ENCODE measurements at regions of chr1 and their contacts with region 1.

Region 1: DNA sequence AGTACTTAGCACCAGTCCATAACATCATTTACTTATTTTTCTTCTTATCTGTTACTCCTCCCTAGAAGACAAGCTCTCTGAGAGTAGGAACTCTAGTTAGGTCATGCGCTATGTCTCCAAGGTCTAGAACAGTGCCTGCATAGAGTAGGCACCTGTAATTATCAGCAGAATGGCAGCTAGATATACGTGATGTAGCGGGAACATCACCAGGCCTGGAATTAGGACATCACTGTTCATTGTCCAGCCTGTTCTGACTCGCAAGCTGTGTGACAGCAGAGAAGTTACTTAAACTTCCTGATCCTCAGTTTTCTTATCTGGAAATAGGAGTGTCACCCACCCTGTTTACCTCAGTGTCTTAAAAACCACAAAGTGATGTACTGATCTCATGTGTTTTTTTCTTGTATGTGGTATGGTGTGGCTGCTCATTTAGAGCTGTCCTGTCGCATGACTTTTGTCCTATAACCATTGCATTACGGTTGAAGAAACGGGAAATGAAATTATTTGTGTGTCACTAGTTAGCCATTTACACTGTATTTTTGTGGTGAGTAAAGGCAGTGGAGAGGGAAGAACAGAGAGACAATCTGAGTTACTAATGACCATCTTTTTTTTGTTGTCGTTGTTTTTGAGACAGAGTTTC is 37.1 kb upstream of the EXO1 start:
- DNase-seq: no peak
- ATAC-seq: no peak
- H3K4me3 ChIP-seq: no peak overlapping the region
- H3K27ac ChIP-seq: no peak overlapping the region
- H3K4me1 ChIP-seq: peaks cover 12 to 36% of the 10 kb centered on the region in 2 experiments
- H3K27me3 ChIP-seq: no peaks in the 10 kb centered on the region
- CTCF ChIP-seq: no peak
- EP300 ChIP-seq: no peak
- POLR2A ChIP-seq: no peak
- RAD21 ChIP-seq: no peak

Region 2: GRCh38 chr1:241048622-241049021 is 762.3 kb before region 1 on chr1:
- CTCF ChIA-PET with region 1: no interaction called
- POLR2A ChIA-PET with region 1: no interaction called
- in situ Hi-C with region 1: no loop called
- intact Hi-C with region 1: no loop called
- DNase-seq: no peak
- ATAC-seq: no peak
- H3K4me3 ChIP-seq: no peak overlapping the region
- H3K27ac ChIP-seq: no peak overlapping the region
- H3K4me1 ChIP-seq: no peaks in the 10 kb centered on the region
- H3K27me3 ChIP-seq: no peaks in the 10 kb centered on the region
- CTCF ChIP-seq: no peak
- EP300 ChIP-seq: no peak
- POLR2A ChIP-seq: no peak
- RAD21 ChIP-seq: no peak

Region 3: GRCh38 chr1:241776916-241777315 is 34.0 kb before region 1 on chr1:
- CTCF ChIA-PET with region 1: no interaction called
- POLR2A ChIA-PET with region 1: no interaction called
- in situ Hi-C with region 1: no loop called
- intact Hi-C with region 1: loop called (anchors 2 kb)
- DNase-seq: no peak
- ATAC-seq: peak; percentile 52
- H3K4me3 ChIP-seq: no peak overlapping the region
- H3K27ac ChIP-seq: no peak overlapping the region
- H3K4me1 ChIP-seq: peaks cover 5 to 9% of the 10 kb centered on the region in 2 experiments
- H3K27me3 ChIP-seq: no peaks in the 10 kb centered on the region
- CTCF ChIP-seq: no peak
- EP300 ChIP-seq: no peak
- POLR2A ChIP-seq: no peak
- RAD21 ChIP-seq: no peak

Region 4: DNA sequence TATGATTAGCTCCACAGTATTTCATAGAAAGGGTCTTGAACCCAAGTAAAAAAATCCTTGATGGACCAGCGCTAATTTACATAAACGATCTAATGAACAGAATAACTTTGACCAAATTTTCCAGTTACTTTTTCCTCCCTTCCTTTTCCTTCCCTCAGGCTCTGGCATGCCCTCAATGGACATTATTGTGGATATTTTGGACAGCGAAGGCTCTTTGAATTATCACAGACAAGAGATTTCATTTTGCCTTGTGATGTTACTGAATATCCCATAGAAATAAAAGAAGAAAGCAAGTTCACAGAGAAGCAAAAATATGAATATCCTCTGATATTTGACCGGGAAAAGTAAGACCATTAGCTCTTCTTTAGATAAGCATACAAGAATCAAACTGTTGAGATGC is 23.2 kb before region 1 on chr1:
- CTCF ChIA-PET with region 1: no interaction called
- POLR2A ChIA-PET with region 1: no interaction called
- in situ Hi-C with region 1: no loop called
- intact Hi-C with region 1: no loop called
- DNase-seq: no peak
- ATAC-seq: no peak
- H3K4me3 ChIP-seq: no peak overlapping the region
- H3K27ac ChIP-seq: no peak overlapping the region
- H3K4me1 ChIP-seq: no peaks in the 10 kb centered on the region; a peak in 1 of 5 replicates
- H3K27me3 ChIP-seq: no peaks in the 10 kb centered on the region
- CTCF ChIP-seq: no peak
- EP300 ChIP-seq: no peak
- POLR2A ChIP-seq: no peak
- RAD21 ChIP-seq: no peak

Measured in K562 (cell line).